Transverse colon (tissue), 4 donors: ENCODE measurements at regions of chr11 and their contacts with region 1.

Region 1: GRCh38 chr11:104380358-104380757 is 216.4 kb upstream of the PDGFD start:
- DNase-seq: no peak
- H3K4me3 ChIP-seq: no peak overlapping the region
- H3K27ac ChIP-seq: no peak overlapping the region
- H3K4me1 ChIP-seq: no peaks in the 10 kb centered on the region
- H3K27me3 ChIP-seq: no peaks in the 10 kb centered on the region
- CTCF ChIP-seq: no peak
- EP300 ChIP-seq: no peak
- POLR2A ChIP-seq: no peak

Region 2: DNA sequence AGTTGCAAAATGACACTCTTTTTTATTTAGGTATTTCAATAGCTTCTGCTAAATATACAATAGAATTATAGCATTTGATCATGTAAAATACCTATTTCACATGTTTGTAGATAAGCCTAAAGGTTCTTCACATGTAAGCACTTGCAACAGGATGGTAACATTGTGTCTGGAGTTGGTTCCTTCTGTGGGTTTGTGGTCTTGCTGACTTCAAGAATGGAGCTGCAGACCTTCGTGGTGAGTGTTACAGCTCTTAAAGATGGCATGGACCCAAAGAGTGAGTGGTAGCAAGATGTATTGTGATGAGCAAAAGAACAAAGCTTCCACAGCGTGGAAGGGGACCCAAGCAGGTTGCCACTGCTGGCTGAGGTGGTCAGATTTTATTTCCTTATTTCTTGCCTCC is 30.0 kb after region 1 on chr11:
- in situ Hi-C with region 1: no loop called
- intact Hi-C with region 1: loop called (anchors 1 kb)
- DNase-seq: no peak
- H3K4me3 ChIP-seq: no peak overlapping the region
- H3K27ac ChIP-seq: no peak overlapping the region
- H3K4me1 ChIP-seq: no peaks in the 10 kb centered on the region
- H3K27me3 ChIP-seq: no peaks in the 10 kb centered on the region
- CTCF ChIP-seq: no peak
- EP300 ChIP-seq: no peak
- POLR2A ChIP-seq: no peak